PC-9 (cell line): ENCODE measurements at regions of chr1 and their contacts with region 1.

Region 1: DNA sequence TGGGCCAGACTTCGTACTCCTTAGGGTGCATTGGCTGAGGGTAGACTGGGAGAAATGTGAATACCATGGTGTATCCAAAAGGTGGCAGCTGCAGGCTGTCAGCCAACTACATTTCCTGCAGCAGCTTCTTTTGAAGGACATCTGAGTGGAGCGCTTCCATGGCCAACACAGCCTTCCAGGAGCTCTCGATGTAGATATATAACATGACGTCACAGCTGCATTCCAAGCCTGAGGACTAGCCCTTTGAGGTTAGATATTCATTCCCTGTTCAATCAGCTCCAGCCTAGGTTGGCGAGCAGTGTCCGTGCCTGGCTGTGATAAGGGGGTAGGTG is 107.8 kb downstream of the MAB21L3 start:
- DNase-seq: no peak
- H3K4me3 ChIP-seq: no peak overlapping the region
- H3K27ac ChIP-seq: no peak overlapping the region
- H3K4me1 ChIP-seq: peaks cover 15% of the 10 kb centered on the region
- H3K27me3 ChIP-seq: no peaks in the 10 kb centered on the region
- CTCF ChIP-seq: no peak

Region 2: DNA sequence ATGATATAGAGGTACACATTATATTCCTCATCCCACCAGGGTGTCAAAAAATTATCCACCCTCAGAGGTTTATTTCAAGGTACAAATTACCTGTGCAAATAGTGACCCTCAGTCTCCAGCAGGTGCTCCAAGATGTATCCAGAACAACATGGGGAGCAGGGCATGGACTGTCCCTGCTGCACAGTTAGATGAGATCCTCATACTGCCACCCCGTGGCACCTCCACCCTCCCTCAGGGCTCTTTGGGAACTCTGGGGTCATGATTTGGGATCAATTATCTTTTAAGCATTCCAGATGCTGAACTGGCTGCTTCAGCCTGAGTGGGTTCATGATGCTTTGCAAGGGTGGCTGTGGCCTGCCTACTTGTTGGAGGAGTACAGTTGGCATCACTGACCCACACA is 211.9 kb before region 1 on chr1:
- CTCF ChIA-PET with region 1: interaction called, 10 read pairs
- POLR2A ChIA-PET with region 1: no interaction called
- intact Hi-C with region 1: no loop called
- DNase-seq: no peak
- H3K4me3 ChIP-seq: no peak overlapping the region
- H3K27ac ChIP-seq: no peak overlapping the region
- H3K4me1 ChIP-seq: no peaks in the 10 kb centered on the region
- H3K27me3 ChIP-seq: no peaks in the 10 kb centered on the region
- CTCF ChIP-seq: no peak